GM12878 (cell line): ENCODE measurements at regions of chr17 and their contacts with region 1.

Region 1: DNA sequence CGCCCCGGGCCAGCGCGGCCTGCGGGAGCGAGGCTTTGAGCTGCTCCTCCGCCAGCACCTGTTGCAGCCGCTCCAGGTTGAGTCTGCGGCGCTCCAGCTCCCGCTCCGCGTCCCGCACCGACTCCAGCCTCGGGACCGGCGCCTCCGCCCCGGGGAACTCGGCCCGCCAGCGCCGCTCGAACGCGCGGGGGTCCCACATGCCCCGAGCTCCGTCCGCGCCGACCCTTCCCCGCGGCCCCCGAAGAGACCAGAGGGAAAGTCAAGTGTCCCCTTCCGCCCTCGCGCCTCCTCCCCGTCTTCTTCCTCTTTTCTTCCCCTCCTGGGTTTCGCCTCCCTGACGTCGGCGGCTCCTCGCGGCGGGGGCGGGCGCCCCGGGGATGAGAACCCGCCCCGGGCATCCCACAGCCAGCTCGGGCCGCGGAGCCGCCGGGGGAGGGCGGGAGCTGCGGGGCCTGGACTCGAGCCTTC is 40.8 kb upstream of the BHLHA9 start:
- DNase-seq: no peak
- ATAC-seq: peak; percentile 74
- H3K4me3 ChIP-seq: peak overlapping the region; percentile 94
- H3K27ac ChIP-seq: peak overlapping the region; percentile 82
- H3K4me1 ChIP-seq: peaks cover 13% of the 10 kb centered on the region
- H3K27me3 ChIP-seq: no peaks in the 10 kb centered on the region
- CTCF ChIP-seq: no peak
- EP300 ChIP-seq: 0 out of 4 replicates have a peak, but pooled peaks of 1 of the 2 experiments have one; percentile 16
- POLR2A ChIP-seq: peak; percentile 90
- RAD21 ChIP-seq: no peak

Region 2: GRCh38 chr17:1179818-1180742 is 49.4 kb before region 1 on chr17 and contains the start of gene ABR:
- CTCF ChIA-PET with region 1: interaction called, 12 read pairs
- POLR2A ChIA-PET with region 1: interaction called, 24 read pairs
- RAD21 ChIA-PET with region 1: interaction called, 32 read pairs
- SMC1A ChIA-PET with region 1: interaction called, 17 read pairs
- in situ Hi-C with region 1: no loop called
- intact Hi-C with region 1: loop called (anchors 5 kb)
- DNase-seq: no peak
- ATAC-seq: peak; percentile 5
- H3K4me3 ChIP-seq: peak within 1 kb of the TSS; percentile 85
- H3K27ac ChIP-seq: peak within 1 kb of the TSS; percentile 89
- H3K4me1 ChIP-seq: peaks cover 57% of the 10 kb centered on the region
- H3K27me3 ChIP-seq: no peaks in the 10 kb centered on the region
- CTCF ChIP-seq: no peak
- EP300 ChIP-seq: no peak
- POLR2A ChIP-seq: peak; percentile 61
- RAD21 ChIP-seq: no peak
- polyA plus RNA-seq, gene ABR: 1.4 to 2.5 TPM

Region 3: GRCh38 chr17:1186923-1187771 is 42.3 kb before region 1 on chr17:
- CTCF ChIA-PET with region 1: interaction called, 14 read pairs
- POLR2A ChIA-PET with region 1: interaction called, 24 read pairs
- RAD21 ChIA-PET with region 1: interaction called, 32 read pairs
- SMC1A ChIA-PET with region 1: interaction called, 17 read pairs
- in situ Hi-C with region 1: no loop called
- intact Hi-C with region 1: loop called (anchors 5 kb)
- DNase-seq: no peak
- ATAC-seq: peak; percentile 78
- H3K4me3 ChIP-seq: no peak overlapping the region
- H3K27ac ChIP-seq: no peak overlapping the region
- H3K4me1 ChIP-seq: peaks cover 56% of the 10 kb centered on the region
- H3K27me3 ChIP-seq: no peaks in the 10 kb centered on the region
- CTCF ChIP-seq: peak; percentile 92 to 99 (median 92)
- EP300 ChIP-seq: no peak
- POLR2A ChIP-seq: no peak
- RAD21 ChIP-seq: peak; percentile 84

Region 4: DNA sequence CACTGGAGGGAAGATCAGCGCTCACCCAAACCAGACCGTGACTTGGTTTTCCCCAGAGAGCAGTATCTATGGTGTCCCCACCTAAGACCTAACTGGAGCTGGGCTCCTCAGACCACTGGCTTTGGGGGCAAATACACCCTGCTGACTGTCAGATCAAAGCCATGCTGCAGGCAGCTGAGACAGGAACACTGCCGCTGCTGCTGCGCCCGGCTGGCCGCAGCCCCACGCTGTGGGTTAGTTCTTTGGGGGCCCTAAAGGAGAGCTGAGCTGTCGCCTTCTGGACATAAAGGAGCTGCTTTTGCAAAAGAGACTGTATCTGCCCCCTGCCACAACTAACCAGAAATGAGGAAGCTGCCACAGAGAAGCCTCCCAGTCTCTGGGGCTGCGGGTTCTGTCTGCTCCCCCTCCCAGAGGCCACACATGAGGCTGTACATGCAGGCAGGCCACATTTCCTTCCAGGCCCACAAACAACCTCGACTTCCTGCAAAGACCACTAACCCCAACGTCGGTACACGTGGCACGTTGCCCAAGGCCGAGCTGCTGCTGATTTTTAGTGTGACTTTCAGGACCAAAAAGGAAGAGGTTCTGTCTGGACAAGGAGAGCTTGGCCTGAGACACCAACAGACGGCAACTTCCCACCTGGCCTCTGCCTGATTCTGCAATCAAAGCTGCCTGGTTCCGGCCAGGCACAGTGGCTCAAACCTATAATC is 31.5 kb before region 1 on chr17:
- CTCF ChIA-PET with region 1: interaction called, 41 read pairs
- POLR2A ChIA-PET with region 1: interaction called, 22 read pairs
- RAD21 ChIA-PET with region 1: interaction called, 50 read pairs
- SMC1A ChIA-PET with region 1: interaction called, 23 read pairs
- in situ Hi-C with region 1: no loop called
- intact Hi-C with region 1: no loop called
- DNase-seq: peak; percentile 97
- ATAC-seq: peak; percentile 88
- H3K4me3 ChIP-seq: peak overlapping the region; percentile 29; the same call in 1 of the 2 replicates
- H3K27ac ChIP-seq: peak overlapping the region; percentile 89
- H3K4me1 ChIP-seq: peaks cover 56% of the 10 kb centered on the region
- H3K27me3 ChIP-seq: no peaks in the 10 kb centered on the region
- CTCF ChIP-seq: no peak
- EP300 ChIP-seq: peak; percentile 64 to 81; a peak in 3 of 4 replicates
- POLR2A ChIP-seq: peak; percentile 57; the same call in 1 of the 2 replicates
- RAD21 ChIP-seq: 0 out of 2 replicates have a peak, but pooled peaks have one; percentile 11

Region 5: DNA sequence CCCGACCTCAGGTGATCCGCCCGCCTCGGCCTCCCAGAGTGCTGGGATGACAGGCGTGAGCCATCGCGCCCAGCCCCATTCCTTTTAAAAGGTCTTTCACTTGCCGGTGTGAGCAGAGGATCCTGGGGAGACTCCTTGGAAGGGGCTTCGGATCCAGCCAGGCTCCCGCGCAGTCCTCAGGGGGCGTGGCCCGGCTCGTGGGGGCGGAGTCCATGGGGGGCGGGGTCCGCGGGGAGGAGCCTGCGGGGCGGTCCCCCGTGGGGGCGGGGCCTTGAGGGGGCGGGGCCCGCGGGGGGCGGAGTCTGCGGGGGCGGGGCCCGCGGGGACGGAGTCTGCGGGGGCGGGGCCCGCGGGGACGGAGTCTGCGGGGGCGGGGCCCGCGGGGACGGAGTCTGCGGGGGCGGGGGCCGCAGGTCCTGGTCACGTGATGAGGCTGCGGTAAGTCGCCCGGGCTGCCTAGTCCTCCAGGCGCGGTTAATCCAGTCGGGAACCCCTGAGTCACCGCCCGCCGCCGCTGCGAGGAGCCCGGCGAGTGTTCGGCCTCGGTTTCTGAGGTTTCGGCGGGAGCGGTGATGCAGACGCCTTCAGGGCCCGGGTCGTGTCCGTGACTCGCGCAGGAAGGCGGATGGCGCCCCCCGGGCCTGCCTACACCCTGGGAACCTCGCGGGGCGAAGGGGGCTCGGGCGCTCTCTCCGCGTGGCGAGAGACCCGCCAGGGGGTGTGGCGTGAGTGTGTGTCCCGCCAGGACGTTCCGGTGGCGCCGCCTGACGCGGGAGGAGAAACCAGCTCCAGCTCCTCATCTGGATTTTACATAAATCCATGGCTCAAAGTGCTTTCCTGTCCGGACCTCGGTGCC is 26.1 kb before region 1 on chr17:
- CTCF ChIA-PET with region 1: interaction called, 41 read pairs
- POLR2A ChIA-PET with region 1: interaction called, 22 read pairs
- RAD21 ChIA-PET with region 1: interaction called, 50 read pairs
- SMC1A ChIA-PET with region 1: interaction called, 23 read pairs
- in situ Hi-C with region 1: no loop called
- intact Hi-C with region 1: no loop called
- DNase-seq: no peak
- ATAC-seq: 0 out of 3 replicates have a peak, but pooled peaks have one; percentile 6
- H3K4me3 ChIP-seq: no peak overlapping the region
- H3K27ac ChIP-seq: no peak overlapping the region
- H3K4me1 ChIP-seq: peaks cover 61% of the 10 kb centered on the region
- H3K27me3 ChIP-seq: no peaks in the 10 kb centered on the region
- CTCF ChIP-seq: no peak
- EP300 ChIP-seq: no peak
- POLR2A ChIP-seq: no peak
- RAD21 ChIP-seq: no peak

Region 6: DNA sequence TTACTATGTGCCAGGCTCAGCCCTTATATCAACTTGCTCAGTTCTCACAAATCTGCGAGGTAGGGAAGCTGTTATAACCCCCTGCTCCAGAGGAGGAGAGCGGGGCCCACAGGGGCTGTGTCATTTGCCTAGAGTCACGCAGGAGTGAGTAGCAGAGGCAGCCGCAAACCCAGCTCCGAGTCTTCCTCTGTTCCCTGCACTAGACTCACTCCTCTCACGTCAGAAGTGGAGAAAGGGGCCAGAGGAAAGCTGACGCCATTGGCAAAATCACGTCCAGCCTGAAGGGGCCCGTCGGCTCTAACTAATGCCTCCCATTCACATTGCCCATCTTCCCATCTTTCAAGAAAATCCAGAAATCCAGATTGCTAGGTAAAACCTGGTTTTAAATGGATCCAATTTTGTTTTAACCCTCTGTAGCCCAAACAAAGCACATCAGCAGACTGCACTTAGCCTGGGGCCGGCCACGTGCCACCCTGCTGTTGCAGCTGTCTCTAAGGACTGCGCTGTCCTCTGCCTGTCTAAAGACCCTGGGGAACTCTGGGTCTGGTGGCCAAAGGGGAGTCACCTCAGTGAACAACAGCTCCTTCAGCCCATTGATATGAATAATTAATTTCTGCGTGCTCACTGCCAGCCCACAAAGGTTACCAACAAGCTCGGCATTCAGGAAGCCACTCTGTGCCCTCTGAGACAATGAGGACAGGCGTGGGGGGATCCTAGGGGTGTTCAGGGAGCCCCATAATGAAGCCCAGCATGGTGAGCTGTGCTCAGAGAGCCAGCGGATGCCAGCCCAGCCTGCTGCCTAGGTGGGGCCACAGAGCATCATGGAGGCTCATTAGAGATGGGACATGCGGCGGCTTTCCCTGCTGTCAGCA is 13.0 kb before region 1 on chr17:
- CTCF ChIA-PET with region 1: interaction called, 23 read pairs
- POLR2A ChIA-PET with region 1: interaction called, 20 read pairs
- RAD21 ChIA-PET with region 1: interaction called, 40 read pairs
- SMC1A ChIA-PET with region 1: interaction called, 35 read pairs
- in situ Hi-C with region 1: no loop called
- intact Hi-C with region 1: no loop called
- DNase-seq: no peak
- ATAC-seq: peak; percentile 81
- H3K4me3 ChIP-seq: peak overlapping the region; percentile 39; the same call in 1 of the 2 replicates
- H3K27ac ChIP-seq: peak overlapping the region; percentile 80
- H3K4me1 ChIP-seq: peaks cover 33% of the 10 kb centered on the region
- H3K27me3 ChIP-seq: no peaks in the 10 kb centered on the region
- CTCF ChIP-seq: no peak
- EP300 ChIP-seq: peak in 1 of 2 experiments; percentile 1; a peak in 1 of 4 replicates
- POLR2A ChIP-seq: no peak
- RAD21 ChIP-seq: no peak

Region 7: DNA sequence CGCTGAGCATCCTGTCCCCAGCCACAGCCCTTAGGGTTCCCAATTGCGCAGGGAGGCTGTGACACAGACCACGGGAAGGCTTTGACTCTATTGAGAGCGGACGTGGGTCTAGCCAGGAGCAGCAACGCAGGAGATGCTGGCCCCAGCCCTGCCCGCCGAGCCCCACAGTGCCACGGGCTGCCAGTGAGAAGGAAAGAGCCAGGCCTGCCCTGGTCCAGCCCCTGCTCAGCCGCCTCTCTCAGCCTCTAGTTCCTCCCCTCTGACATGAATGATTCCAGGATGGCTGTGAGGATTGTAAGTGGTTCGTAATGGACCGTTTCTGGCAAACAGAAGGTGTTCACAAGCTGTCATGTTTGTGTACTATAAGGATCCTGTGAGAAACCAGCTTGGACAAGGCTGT is 43.2 kb after region 1 on chr17:
- CTCF ChIA-PET with region 1: no interaction called
- POLR2A ChIA-PET with region 1: no interaction called
- RAD21 ChIA-PET with region 1: no interaction called
- SMC1A ChIA-PET with region 1: no interaction called
- in situ Hi-C with region 1: no loop called
- intact Hi-C with region 1: no loop called
- DNase-seq: no peak
- ATAC-seq: no peak
- H3K4me3 ChIP-seq: no peak overlapping the region
- H3K27ac ChIP-seq: no peak overlapping the region
- H3K4me1 ChIP-seq: no peaks in the 10 kb centered on the region
- H3K27me3 ChIP-seq: no peaks in the 10 kb centered on the region; a peak in 1 of 4 replicates
- CTCF ChIP-seq: no peak
- EP300 ChIP-seq: no peak
- POLR2A ChIP-seq: no peak
- RAD21 ChIP-seq: no peak

Region 8: DNA sequence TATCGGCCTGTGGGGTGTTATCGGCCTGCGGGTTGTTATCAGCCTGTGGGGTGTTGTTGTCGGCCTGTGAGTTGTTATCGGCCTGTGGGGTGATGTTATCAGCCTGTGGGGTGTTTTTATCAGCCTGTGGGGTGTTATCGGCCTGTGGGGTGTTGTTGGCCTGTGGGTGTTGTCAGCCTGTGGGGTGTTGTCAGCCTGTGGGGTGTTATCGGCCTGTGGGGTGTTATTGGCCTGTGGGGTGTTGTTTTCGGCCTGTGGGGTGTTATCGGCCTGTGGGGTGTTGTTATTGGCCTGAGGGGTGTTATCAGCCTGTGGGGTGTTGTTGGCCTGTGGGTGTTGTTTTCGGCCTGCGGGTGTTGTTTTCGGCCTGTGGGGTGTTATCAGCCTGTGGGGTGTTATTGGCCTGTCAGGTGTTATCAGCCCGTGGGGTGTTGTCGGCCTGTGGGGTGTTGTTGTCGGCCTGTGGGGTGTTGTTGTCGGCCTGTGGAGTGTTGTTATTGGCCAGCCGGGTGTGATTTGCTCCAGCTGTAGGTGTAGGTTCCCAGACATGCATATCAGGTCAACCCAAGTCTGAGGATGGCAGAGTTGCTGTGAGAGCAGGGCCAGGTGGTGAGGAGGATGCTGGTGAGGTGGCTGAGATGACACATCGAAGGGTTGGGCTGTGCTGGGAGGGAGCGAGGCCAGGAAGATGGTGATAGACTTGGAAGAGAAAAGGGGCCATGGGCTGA is 57.1 kb after region 1 on chr17:
- CTCF ChIA-PET with region 1: no interaction called
- POLR2A ChIA-PET with region 1: no interaction called
- RAD21 ChIA-PET with region 1: no interaction called
- SMC1A ChIA-PET with region 1: no interaction called
- in situ Hi-C with region 1: no loop called
- intact Hi-C with region 1: no loop called
- DNase-seq: no peak
- ATAC-seq: no peak
- H3K4me3 ChIP-seq: no peak overlapping the region
- H3K27ac ChIP-seq: no peak overlapping the region
- H3K4me1 ChIP-seq: no peaks in the 10 kb centered on the region
- H3K27me3 ChIP-seq: no peaks in the 10 kb centered on the region
- CTCF ChIP-seq: no peak
- EP300 ChIP-seq: no peak
- POLR2A ChIP-seq: no peak
- RAD21 ChIP-seq: no peak